Common myeloid progenitor, CD34-positive (primary cell): ENCODE measurements at regions of chr21 and their contacts with region 1.

Region 1: GRCh38 chr21:43874085-43874785 is 9.2 kb downstream of the AGPAT3 start:
- DNase-seq: no peak
- H3K4me3 ChIP-seq: no peak overlapping the region
- H3K27ac ChIP-seq: no peak overlapping the region
- H3K4me1 ChIP-seq: peaks cover 0 to 15% (median 4%) of the 10 kb centered on the region in 4 experiments
- H3K27me3 ChIP-seq: no peaks in the 10 kb centered on the region

Region 2: GRCh38 chr21:43712308-43712974 is 161.8 kb before region 1 on chr21:
- CTCF ChIA-PET with region 1: no interaction called
- POLR2A ChIA-PET with region 1: no interaction called
- DNase-seq: no peak
- H3K4me3 ChIP-seq: no peak overlapping the region
- H3K27ac ChIP-seq: no peak overlapping the region
- H3K4me1 ChIP-seq: peaks cover 0 to 8% (median 6%) of the 10 kb centered on the region in 4 experiments
- H3K27me3 ChIP-seq: no peaks in the 10 kb centered on the region

Region 3: DNA sequence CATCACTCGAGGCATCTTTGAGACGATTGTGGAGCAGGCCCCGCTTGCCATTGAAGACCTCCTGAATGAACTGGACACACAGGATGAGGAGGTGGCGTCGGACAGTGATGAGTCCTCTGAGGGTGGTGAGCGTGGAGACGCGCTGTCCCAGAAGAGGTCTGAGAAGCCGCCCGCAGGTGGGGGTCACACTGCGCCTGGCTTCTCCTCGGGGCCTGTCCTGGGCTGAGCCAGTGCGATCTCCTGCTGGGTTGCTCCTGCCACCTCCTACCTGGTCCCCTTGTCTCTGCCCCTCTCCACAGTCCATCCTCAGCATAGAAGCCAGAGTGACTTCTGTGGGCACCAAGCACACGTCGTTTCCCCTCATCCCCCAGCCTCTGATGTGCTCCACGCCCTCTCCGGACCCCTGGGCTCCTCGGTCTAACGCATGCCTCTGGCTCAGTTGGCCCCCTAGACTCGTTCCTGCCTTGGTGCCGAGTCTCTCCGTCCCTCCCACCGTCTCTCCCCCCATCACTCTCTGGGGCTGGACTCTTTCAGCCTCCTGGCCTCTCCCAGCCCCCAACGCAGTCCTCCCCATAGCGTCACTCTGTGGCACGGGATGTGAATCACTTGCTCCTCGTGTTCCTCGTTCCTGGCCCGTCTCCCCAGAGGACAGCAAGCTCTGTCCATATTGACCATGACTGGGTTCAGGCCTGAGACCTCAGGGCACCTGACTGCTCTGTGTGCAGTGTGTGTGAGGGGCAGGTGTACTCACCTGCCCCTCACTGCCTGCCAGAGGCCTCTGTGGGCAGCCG is 76.1 kb before region 1 on chr21:
- CTCF ChIA-PET with region 1: no interaction called
- POLR2A ChIA-PET with region 1: no interaction called
- DNase-seq: no peak
- H3K4me3 ChIP-seq: no peak overlapping the region
- H3K27ac ChIP-seq: no peak overlapping the region
- H3K4me1 ChIP-seq: no peaks in the 10 kb centered on the region
- H3K27me3 ChIP-seq: no peaks in the 10 kb centered on the region

Region 4: GRCh38 chr21:43884012-43884860 is 10.0 kb after region 1 on chr21:
- CTCF ChIA-PET with region 1: interaction called, 23 read pairs
- POLR2A ChIA-PET with region 1: no interaction called
- DNase-seq: peak; percentile 90 to 93 (median 93)
- H3K4me3 ChIP-seq: peak overlapping the region in 3 of 7 experiments; percentile 40 to 59 (median 45)
- H3K27ac ChIP-seq: peak overlapping the region in 1 of 2 experiments; percentile 79
- H3K4me1 ChIP-seq: peaks cover 0 to 37% (median 17%) of the 10 kb centered on the region in 4 experiments
- H3K27me3 ChIP-seq: no peaks in the 10 kb centered on the region

Region 5: GRCh38 chr21:43938751-43939442 is 64.7 kb after region 1 on chr21:
- CTCF ChIA-PET with region 1: interaction called, 11 read pairs
- POLR2A ChIA-PET with region 1: no interaction called
- DNase-seq: peak; percentile 88 to 93 (median 93)
- H3K4me3 ChIP-seq: peak overlapping the region; percentile 29 to 83 (median 64)
- H3K27ac ChIP-seq: no peak overlapping the region
- H3K4me1 ChIP-seq: peaks cover 0 to 14% (median 10%) of the 10 kb centered on the region in 4 experiments
- H3K27me3 ChIP-seq: no peaks in the 10 kb centered on the region